Dendritic cell treated with granulocyte-macrophage colony-stimulating factor and Interleukin-4, amounts not matched to agents 40 ng/mL and 50 ng/mL, for 4 days (primary cell): ENCODE measurements at regions of chr17 and their contacts with region 1.

Region 1: DNA sequence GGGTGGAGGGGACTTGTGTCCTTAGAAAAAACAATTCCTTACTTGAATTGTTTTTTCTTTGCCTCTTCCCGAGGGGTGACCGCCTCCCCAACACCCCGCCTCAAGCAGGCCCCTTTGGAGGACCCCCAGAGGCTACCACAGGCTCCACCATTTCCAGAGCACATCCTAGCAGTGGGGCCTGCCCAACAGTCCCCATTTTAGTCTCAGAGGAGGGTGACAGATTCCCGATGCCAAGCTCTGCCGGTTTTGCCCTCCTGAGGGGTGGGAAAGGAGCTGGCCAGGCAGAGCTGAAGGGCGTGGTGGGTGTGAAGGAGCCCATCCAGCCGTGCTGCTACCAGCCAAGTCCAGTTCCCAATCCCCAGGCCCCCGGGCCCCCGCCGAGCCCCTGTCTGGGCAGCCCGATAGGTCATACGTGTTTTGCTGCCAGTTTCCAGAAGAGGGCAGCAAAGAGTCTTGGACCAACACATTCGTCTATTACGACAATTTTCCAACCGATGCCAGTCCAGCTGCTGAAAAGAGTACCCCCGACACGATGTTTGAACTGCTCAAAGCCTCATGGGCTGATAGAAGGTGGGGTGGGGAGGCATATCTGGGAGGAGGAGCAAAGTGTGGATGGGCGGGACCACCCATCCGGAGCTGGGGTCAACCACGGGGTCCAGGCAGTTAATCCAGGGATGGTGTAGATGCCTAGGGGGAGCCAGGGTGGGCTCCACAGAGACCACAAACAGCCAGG is 18.8 kb upstream of the GAA start:
- H3K4me3 Mint-ChIP-seq: no peak overlapping the region
- H3K27ac Mint-ChIP-seq: peak overlapping the region; percentile 69
- H3K4me1 Mint-ChIP-seq: peaks cover 10% of the 10 kb centered on the region
- H3K27me3 Mint-ChIP-seq: peaks cover 19% of the 10 kb centered on the region

Region 2: GRCh38 chr17:80125716-80126715 is 43.4 kb after region 1 on chr17:
- intact Hi-C with region 1: loop called (anchors 5 kb)
- H3K4me3 Mint-ChIP-seq: no peak overlapping the region
- H3K27ac Mint-ChIP-seq: no peak overlapping the region
- H3K4me1 Mint-ChIP-seq: no peaks in the 10 kb centered on the region
- H3K27me3 Mint-ChIP-seq: peaks cover 14% of the 10 kb centered on the region